K562 (cell line): ENCODE measurements at regions of chr15 and their contacts with region 1.

Region 1: DNA sequence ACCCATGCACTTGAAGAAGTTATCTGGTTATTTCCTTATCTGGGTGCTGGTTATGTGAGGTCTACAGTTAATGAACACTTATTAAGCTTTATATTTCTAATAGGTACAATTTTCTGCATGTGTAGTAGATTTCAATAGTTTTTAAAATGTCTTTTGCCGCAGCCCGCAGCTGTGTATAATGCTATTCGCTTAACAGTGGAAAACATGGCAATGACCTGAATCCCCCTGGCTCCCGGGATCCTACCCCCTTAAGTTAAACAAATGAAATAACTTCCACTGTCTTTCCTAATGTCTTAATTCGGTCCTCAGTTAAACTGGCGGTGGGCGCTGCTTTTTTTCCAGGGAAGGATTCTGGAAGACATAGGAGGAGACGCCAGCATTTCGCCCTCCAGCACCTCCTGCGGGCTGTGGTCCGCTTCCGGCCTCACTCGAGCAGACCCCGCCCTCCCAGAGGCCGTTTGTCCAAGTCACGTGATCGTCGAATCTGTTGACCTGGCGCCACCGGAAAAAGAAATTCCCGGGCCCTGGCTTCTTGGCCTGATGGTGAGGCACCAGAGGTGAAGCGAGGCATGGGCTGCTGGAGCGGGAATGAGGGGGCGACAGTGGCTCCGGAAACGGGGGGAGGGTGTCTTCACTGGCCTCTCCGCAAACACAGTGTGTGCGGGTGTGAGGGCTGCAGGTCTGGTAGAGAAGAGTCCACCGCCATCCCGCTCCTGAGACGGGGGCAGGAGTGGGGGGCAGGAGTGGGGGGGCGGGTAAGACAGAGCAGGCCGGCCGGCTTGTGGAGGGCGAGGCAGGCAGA is 45.6 kb upstream of the CSPG4 start:
- DNase-seq: peak; percentile 92 to 96 (median 92)
- ATAC-seq: peak; percentile 96
- H3K4me3 ChIP-seq: peak overlapping the region; percentile 58
- H3K27ac ChIP-seq: peak overlapping the region; percentile 95
- H3K4me1 ChIP-seq: peaks cover 11 to 14% of the 10 kb centered on the region in 2 experiments
- H3K27me3 ChIP-seq: no peaks in the 10 kb centered on the region
- CTCF ChIP-seq: peak; percentile 40 to 48 (median 41); a peak in 5 of 6 replicates
- EP300 ChIP-seq: peak; percentile 72
- POLR2A ChIP-seq: peak; percentile 86
- RAD21 ChIP-seq: no peak

Region 2: DNA sequence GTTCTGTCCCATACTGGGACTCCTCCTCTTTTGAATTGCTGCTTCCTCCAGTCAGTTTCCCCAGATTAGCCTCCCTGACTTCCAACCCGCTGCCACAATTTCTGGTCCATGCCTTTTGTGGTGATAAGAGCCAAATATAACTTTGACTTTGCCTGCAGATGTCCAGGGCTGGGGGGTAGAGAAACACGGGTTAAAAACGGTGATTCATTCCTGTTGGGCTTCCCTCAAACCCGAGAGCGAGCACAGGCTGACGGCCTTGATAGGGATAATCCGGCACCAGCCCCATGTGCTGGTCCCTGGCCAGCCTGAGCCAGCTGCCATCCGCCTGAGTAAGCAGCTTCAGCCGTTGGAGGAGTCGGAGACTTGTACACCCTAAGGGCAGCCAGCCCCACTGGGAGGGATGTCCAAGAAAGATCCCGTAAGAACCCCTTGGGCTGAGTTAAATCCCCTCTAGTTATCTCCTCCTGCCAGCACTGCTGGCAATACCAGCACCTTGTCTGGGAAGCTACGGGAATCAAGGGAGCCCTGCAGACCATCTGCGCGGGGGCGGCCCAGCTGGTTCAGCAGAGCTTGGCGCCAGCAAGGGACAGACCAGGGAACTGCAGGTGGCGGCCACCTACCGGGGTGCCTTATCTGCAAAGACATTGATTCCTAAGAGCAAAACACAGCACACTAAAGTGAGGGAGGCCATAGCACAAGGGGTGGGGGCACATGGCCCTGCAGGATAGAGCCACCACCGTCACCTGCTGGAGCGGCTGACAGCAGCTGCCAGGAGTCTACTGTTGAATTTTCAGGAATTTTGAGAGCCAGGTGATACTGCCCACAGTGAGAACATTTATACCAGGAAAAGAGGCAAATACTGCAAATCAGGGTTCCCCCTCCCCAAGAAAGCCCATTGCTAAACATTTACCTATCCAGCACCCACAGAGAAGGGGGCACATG is 63.8 kb before region 1 on chr15:
- CTCF ChIA-PET with region 1: no interaction called
- POLR2A ChIA-PET with region 1: no interaction called
- in situ Hi-C with region 1: no loop called
- intact Hi-C with region 1: loop called (anchors 1 kb)
- DNase-seq: peak; percentile 89 to 95 (median 91)
- ATAC-seq: peak; percentile 94
- H3K4me3 ChIP-seq: no peak overlapping the region
- H3K27ac ChIP-seq: peak overlapping the region; percentile 39; the same call in 2 of the 3 replicates
- H3K4me1 ChIP-seq: peaks cover 19 to 46% of the 10 kb centered on the region in 2 experiments
- H3K27me3 ChIP-seq: peaks cover 0 to 5% of the 10 kb centered on the region in 2 experiments; a peak in 1 of 5 replicates
- CTCF ChIP-seq: peak; percentile 62 to 85 (median 67)
- EP300 ChIP-seq: peak; percentile 35; the same call in 1 of the 2 replicates
- POLR2A ChIP-seq: no peak
- RAD21 ChIP-seq: peak in 1 of 2 experiments; percentile 49; a peak in 2 of 4 replicates

Region 3: DNA sequence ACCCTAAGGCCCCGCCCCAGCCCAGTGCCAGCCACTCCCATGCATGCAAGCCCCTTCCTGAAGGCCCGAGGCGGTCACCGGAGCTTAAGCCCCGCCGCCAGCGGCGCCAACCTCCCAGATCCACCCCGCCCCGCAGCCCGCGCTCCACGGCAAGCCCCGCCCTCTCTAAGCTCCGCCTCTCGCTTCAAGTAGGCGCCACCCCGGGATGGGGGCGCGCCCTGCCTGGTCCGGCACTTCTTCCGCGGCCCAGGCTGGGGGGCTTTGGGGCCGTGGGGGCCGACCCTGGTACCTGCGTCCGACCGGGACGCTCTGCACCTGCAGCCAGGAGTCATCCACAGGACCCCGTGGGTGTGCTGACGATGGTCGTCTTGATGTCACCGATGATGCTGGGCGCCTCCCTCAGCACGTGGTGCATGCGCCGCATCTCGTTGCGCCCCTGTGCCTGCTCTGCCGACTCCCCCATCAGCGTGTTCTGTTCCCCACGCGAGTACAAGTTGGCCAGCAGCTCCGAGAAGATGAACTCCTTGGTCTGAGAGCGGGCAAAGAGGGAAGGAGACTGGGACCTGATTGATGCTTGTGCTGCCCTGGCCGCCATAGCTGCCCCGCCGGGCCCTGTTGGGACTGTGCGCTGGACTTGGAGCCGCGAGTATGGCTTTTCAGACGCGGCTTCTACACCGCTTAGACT is 19.5 kb before region 1 on chr15:
- CTCF ChIA-PET with region 1: no interaction called
- POLR2A ChIA-PET with region 1: interaction called, 6 read pairs
- in situ Hi-C with region 1: no loop called
- intact Hi-C with region 1: loop called (anchors 2 kb)
- DNase-seq: peak; percentile 97 to 99 (median 98)
- ATAC-seq: peak; percentile 100
- H3K4me3 ChIP-seq: peak overlapping the region; percentile 69
- H3K27ac ChIP-seq: peak overlapping the region; percentile 46; the same call in 2 of the 3 replicates
- H3K4me1 ChIP-seq: peaks cover 5 to 27% of the 10 kb centered on the region in 2 experiments; a peak in 4 of 5 replicates
- H3K27me3 ChIP-seq: no peaks in the 10 kb centered on the region
- CTCF ChIP-seq: no peak
- EP300 ChIP-seq: no peak
- POLR2A ChIP-seq: peak; percentile 69
- RAD21 ChIP-seq: no peak